Caco-2 (cell line): ENCODE measurements at regions of chr10 and their contacts with region 1.

Region 1: DNA sequence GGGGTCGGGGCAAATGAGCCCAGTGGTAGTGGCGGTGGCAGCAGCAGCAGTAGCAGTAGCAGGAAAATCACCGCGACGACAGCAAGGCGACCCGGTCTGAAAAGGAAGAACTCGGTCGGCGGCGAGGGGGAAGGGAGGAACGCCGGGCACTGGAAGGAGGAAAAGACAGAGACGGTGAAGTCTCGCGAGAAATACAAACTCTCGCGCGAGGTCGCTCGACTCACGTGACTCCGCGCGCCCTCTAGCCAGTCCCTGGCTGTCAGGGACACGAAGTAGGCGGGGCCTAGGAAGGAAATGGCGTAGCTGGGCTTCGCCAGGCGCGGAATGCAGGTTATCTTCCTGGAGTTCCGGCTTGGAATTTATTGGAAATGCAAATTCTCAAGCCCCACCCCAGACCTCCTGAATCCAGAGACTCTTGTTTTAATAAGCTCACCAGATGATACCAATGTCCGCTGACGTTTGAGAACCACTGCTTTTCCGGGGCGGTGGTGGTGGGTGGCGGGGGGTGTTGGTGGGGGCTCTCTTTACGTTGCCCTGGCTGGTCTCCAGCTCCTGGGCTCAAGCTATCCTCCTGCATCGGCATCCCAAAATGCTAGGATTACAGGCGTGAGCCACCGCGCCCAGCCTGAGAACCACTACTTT is at the start of gene SMNDC1:
- DNase-seq: peak; percentile 99
- H3K4me3 ChIP-seq: peak within 1 kb of the TSS; percentile 94
- H3K4me3 Mint-ChIP-seq: peak within 1 kb of the TSS; percentile 91
- H3K27ac Mint-ChIP-seq: peak within 1 kb of the TSS; percentile 90
- H3K4me1 ChIP-seq: peaks cover 13% of the 10 kb centered on the region
- H3K4me1 Mint-ChIP-seq: no peaks in the 10 kb centered on the region
- H3K27me3 ChIP-seq: no peaks in the 10 kb centered on the region
- H3K27me3 Mint-ChIP-seq: no peaks in the 10 kb centered on the region
- CTCF ChIP-seq: no peak
- total RNA-seq, gene SMNDC1: 51.6 and 52.4 TPM in 2 replicates

Region 2: GRCh38 chr10:110200503-110200902 is 104.4 kb before region 1 on chr10:
- CTCF ChIA-PET with region 1: no interaction called
- POLR2A ChIA-PET with region 1: no interaction called
- intact Hi-C with region 1: no loop called
- DNase-seq: no peak
- H3K4me3 ChIP-seq: no peak overlapping the region
- H3K4me3 Mint-ChIP-seq: no peak overlapping the region
- H3K27ac Mint-ChIP-seq: no peak overlapping the region
- H3K4me1 ChIP-seq: peaks cover 14% of the 10 kb centered on the region
- H3K4me1 Mint-ChIP-seq: peaks cover 11% of the 10 kb centered on the region
- H3K27me3 ChIP-seq: no peaks in the 10 kb centered on the region
- H3K27me3 Mint-ChIP-seq: no peaks in the 10 kb centered on the region
- CTCF ChIP-seq: no peak

Region 3: DNA sequence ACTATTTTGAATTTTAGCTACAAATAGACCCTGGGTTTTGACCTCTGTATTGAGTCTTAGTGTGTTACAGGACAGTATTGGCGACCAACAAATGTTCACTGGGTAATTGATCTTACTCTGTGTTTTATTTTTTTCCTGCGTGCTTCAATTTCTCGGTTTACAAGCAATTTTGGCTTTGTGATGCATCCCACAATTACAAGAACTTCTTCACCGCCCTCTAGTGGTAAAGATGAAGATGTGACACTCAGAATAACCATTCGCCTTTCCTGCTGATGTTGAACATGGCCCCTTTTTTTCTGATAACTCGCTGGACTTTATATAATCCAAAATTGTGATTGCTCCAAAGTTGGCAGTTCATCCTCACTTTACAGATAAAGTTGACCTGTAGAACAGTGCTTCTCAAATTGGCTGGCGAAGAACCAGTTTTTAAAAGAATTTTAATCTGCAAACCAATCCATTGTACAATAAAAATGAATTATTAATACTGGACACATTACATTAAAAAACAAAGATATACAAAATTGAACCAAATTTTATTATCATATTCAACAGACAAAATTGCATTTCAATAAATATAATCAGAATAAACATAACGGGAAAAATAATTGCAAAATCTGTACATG is 242.3 kb after region 1 on chr10:
- CTCF ChIA-PET with region 1: interaction called, 5 read pairs
- POLR2A ChIA-PET with region 1: interaction called, 3 read pairs
- intact Hi-C with region 1: loop called (anchors 1 kb)
- DNase-seq: peak in 1 of 2 experiments; percentile 45
- H3K4me3 ChIP-seq: no peak overlapping the region
- H3K4me3 Mint-ChIP-seq: no peak overlapping the region
- H3K27ac Mint-ChIP-seq: no peak overlapping the region
- H3K4me1 ChIP-seq: no peaks in the 10 kb centered on the region
- H3K4me1 Mint-ChIP-seq: peaks cover 11% of the 10 kb centered on the region
- H3K27me3 ChIP-seq: no peaks in the 10 kb centered on the region
- H3K27me3 Mint-ChIP-seq: no peaks in the 10 kb centered on the region
- CTCF ChIP-seq: peak; percentile 85 to 89

Region 4: DNA sequence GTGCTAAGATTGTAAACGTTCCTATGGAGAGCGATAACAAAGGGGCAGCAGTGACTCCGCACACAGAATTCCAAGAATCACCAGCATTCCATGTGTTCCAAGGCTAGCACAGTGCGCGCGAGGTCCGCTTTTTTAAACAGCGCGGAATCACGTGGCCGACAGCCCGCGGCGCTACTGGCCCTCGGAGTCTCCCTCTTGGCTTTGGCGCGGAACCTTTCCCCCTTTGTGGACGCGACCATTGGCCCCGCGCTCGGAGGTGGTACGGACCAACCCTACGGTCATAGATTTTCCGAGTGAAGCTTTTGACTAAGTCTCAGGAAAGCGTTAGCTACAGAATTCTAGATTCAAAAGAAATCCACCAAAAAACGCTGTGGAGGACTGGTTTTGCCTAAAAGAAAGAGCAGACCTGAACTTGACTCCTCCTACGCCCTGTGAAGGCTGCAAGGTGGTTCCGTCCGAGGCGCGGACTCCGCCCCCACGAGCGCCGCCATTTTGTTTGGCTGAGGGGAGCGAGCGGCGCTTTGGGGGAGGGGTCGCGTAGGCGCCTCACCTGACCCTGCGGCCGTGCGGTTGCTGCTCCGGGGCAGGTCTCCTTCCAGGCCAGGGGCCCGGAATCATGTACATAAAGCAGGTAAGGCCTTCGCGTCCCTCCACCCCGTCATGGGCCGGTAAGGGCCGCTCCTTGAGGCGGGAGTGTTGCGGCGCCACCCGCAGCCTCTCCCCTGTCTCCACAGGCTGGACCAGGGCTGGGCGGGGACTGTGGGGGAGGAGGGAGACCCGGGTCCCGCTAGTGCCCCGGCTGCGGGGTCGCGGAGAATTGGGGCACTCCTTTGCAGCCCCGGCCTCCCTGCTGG is 262.5 kb after region 1 on chr10 and contains the start of gene SMC3:
- CTCF ChIA-PET with region 1: no interaction called
- POLR2A ChIA-PET with region 1: interaction called, 3 read pairs
- intact Hi-C with region 1: loop called (anchors 1 kb)
- DNase-seq: peak; percentile 96 to 98
- H3K4me3 ChIP-seq: peak within 1 kb of the TSS; percentile 82
- H3K4me3 Mint-ChIP-seq: peak within 1 kb of the TSS; percentile 90
- H3K27ac Mint-ChIP-seq: peak within 1 kb of the TSS; percentile 100
- H3K4me1 ChIP-seq: peaks cover 30% of the 10 kb centered on the region
- H3K4me1 Mint-ChIP-seq: peaks cover 16% of the 10 kb centered on the region
- H3K27me3 ChIP-seq: no peaks in the 10 kb centered on the region
- H3K27me3 Mint-ChIP-seq: no peaks in the 10 kb centered on the region
- CTCF ChIP-seq: no peak
- total RNA-seq, gene SMC3: 91.4 and 95.7 TPM in 2 replicates

Region 5: GRCh38 chr10:110600487-110601101 is 295.7 kb after region 1 on chr10:
- CTCF ChIA-PET with region 1: interaction called, 12 read pairs
- POLR2A ChIA-PET with region 1: no interaction called
- intact Hi-C with region 1: loop called (anchors 1 kb)
- DNase-seq: peak; percentile 54 to 72
- H3K4me3 ChIP-seq: no peak overlapping the region
- H3K4me3 Mint-ChIP-seq: no peak overlapping the region
- H3K27ac Mint-ChIP-seq: no peak overlapping the region
- H3K4me1 ChIP-seq: no peaks in the 10 kb centered on the region
- H3K4me1 Mint-ChIP-seq: no peaks in the 10 kb centered on the region
- H3K27me3 ChIP-seq: no peaks in the 10 kb centered on the region
- H3K27me3 Mint-ChIP-seq: no peaks in the 10 kb centered on the region
- CTCF ChIP-seq: peak; percentile 61 to 76

Region 6: DNA sequence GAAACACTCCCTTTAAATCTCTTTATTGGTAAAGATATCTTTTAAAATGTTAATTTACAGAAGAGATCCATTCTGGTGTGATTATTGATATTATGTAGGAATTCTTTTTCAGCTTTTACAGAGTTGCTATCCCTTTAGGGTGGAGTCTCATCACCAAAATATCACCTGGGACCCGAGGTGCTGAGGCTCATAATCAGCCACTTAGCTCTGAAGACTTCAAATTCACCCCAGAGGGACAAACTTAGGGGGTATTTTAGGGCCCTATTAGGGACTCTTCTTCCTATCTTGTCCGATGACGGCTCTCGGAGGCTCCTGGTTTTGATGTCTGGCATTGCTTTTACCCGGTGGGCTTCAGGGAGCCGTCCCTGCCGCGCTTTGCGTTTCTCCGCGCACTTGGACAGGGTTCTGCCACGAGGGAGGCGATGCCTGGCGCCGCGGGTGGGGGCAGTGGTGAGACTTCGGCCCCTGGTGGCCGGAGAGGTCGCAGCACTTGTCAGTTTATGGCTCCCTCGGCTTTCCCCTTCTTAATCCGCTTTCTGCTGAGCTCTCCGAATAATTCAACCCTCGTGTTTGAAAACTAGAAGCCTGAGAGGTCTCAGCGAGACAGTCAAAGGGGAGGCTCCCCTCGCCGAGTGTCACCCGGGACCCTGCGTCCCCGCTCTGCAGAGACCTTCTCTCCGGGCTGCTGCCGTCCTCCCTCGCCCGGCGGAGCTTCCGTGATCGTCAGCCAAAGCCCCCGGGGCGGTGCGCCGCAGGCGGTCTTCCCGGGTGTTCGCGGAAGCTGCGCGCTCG is 367.1 kb after region 1 on chr10:
- CTCF ChIA-PET with region 1: no interaction called
- POLR2A ChIA-PET with region 1: no interaction called
- intact Hi-C with region 1: loop called (anchors 1 kb)
- DNase-seq: peak; percentile 64 to 75
- H3K4me3 ChIP-seq: peak overlapping the region; percentile 50
- H3K4me3 Mint-ChIP-seq: peak overlapping the region; percentile 71
- H3K27ac Mint-ChIP-seq: peak overlapping the region; percentile 60
- H3K4me1 ChIP-seq: no peaks in the 10 kb centered on the region
- H3K4me1 Mint-ChIP-seq: no peaks in the 10 kb centered on the region
- H3K27me3 ChIP-seq: no peaks in the 10 kb centered on the region
- H3K27me3 Mint-ChIP-seq: peaks cover 9% of the 10 kb centered on the region
- CTCF ChIP-seq: peak; percentile 69 to 81

Region 7: DNA sequence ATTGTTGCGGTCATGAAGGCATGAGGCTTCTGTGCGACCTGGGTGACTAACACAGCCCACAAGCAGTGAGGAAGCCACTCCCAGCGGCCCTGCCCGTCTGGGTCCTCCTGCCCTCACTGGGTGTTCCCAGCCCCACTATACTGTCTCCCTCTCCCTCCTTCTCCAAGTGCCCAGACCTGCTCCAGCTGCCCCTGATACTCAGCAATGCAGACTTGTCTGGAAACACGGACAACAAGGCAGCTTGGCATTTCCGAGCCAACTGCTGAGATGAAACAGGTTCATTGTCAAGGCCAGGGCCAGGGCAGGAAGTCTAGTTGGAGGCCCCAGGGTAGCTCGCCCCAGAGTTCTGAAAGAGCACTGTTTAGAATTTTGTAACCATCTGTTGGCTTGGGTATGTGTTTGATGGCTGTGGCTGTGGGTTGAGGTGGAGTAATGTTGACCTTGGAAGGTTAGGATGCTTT is 434.9 kb after region 1 on chr10:
- CTCF ChIA-PET with region 1: no interaction called
- POLR2A ChIA-PET with region 1: no interaction called
- intact Hi-C with region 1: loop called (anchors 5 kb)
- DNase-seq: no peak
- H3K4me3 ChIP-seq: no peak overlapping the region
- H3K4me3 Mint-ChIP-seq: no peak overlapping the region
- H3K27ac Mint-ChIP-seq: no peak overlapping the region
- H3K4me1 ChIP-seq: peaks cover 30% of the 10 kb centered on the region
- H3K4me1 Mint-ChIP-seq: peaks cover 30% of the 10 kb centered on the region
- H3K27me3 ChIP-seq: no peaks in the 10 kb centered on the region
- H3K27me3 Mint-ChIP-seq: no peaks in the 10 kb centered on the region
- CTCF ChIP-seq: no peak